Activated CD4-positive, alpha-beta T cell treated with anti-CD3 and anti-CD28 coated beads, Interleukin-2, amount 10 ng/mL, durations not matched to agents 24 days and 14 days (primary cell): ENCODE measurements at regions of chr17 and their contacts with region 1.

Region 1: DNA sequence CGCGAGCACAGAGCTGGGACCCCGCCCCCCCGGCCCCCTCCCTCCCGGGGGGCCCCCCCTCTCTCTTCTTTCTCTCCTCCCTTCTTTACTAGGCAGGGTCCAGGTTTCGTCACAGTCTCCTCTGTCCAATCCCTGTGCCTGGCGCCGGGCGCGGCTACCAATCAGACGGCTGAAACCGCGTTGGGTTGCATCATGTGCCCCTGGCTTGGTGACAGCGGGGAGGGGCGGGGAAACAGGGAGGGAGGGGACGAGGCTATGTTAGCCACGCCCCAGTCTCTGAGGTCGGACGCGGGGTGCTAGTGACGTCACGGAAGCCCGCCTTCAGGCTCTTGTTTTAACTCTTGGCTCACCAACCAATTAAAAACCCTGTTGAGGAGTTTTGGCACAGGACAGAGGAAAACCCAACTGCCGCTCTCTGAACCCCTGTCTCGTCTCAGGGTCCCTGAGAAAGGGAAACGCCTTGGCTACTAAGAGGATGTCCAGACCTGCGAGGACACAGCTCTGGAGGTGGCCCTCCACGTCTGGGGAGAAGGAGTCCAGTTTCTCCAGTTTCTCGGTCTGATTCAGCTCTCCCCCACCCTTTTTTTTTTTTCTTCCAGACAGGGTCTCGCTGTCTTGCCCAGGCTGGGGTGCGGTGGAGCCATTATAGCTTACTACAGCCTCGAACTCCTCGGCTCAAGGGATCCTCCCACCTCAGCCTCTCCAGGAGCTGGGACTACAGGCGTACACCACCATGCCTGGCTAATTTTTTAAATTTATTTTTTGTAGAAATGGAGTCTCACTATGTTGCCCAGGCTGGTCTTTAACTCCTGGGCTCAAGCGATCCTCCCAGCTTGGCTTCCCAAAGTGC is 439 bp upstream of the PLEKHH3 start:
- DNase-seq: peak; percentile 99
- H3K4me3 Mint-ChIP-seq: peak overlapping the region; percentile 81
- H3K27ac Mint-ChIP-seq: peak overlapping the region; percentile 79
- H3K4me1 Mint-ChIP-seq: peaks cover 46% of the 10 kb centered on the region
- H3K27me3 Mint-ChIP-seq: peaks cover 38% of the 10 kb centered on the region

Region 2: DNA sequence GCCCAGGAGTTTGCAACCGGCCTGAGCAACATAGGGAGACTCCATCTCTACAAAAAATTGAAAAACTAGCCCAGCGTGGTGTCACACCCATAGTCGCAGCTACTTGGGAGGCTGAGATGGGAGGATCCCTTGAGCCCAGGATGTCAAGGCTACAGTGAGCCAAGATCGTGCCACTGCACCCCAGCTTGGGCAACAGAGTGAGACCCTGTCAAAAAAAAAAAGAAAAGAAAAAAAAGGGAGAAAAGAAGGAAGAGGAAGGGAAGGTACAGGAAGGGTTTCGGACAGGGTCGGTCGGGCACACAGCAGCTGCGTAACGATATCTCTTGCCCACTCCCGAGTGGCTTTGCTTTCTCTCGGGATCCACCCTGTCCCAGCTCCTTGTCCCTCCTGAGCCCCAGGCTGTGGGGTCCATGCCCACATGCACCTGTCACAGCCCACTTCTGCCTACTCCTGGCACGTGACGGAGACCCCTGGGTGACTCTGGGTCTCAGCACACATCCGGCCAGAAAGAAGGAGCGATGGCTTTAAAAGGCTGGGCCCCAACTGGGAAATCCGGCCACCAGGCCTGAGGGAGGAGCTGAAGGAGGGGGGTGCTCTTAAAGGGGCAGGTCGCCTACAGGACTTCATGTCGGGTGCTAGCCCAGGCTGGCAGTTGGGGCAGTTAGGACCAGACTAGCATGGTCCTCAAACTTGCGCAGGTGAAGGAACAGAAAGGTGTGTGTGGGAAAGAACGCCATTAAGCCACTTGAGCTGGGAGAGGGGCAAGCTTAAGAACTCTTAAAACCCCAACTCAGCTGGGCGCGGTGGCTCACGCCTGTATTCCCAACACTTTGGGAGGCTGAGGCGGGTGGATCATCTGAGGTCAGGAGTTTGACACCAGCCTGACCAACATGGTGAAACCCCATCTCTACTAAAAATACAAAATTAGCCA is 483.0 kb before region 1 on chr17 and contains the start of gene GHDC:
- intact Hi-C with region 1: loop called (anchors 5 kb)
- DNase-seq: peak; percentile 95
- H3K4me3 Mint-ChIP-seq: peak within 1 kb of the TSS; percentile 89
- H3K27ac Mint-ChIP-seq: peak within 1 kb of the TSS; percentile 84
- H3K4me1 Mint-ChIP-seq: peaks cover 14% of the 10 kb centered on the region
- H3K27me3 Mint-ChIP-seq: no peaks in the 10 kb centered on the region
- total RNA-seq, gene GHDC: 14.4 and 17.5 TPM in 2 replicates

Region 3: DNA sequence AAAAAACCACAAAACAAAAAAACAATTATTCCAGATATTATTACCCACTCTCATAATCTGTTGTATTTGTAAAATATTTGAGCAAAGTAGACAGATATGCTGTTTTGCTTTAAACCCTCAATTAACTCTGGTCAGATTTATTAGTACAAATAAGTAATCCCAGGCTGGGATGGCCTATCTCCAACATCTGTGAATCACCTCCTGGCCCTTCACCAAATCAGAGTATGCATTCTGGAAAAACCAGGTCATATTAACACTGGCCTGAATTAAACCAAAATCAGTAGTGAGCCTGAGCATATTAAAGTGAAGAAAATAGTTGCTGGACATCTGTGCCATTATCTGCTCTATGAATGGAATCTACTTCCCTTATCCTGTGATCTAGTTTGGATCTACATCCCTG is 330.0 kb before region 1 on chr17:
- intact Hi-C with region 1: no loop called
- DNase-seq: no peak
- H3K4me3 Mint-ChIP-seq: no peak overlapping the region
- H3K27ac Mint-ChIP-seq: peak overlapping the region; percentile 76
- H3K4me1 Mint-ChIP-seq: peaks cover 38% of the 10 kb centered on the region
- H3K27me3 Mint-ChIP-seq: no peaks in the 10 kb centered on the region

Region 4: DNA sequence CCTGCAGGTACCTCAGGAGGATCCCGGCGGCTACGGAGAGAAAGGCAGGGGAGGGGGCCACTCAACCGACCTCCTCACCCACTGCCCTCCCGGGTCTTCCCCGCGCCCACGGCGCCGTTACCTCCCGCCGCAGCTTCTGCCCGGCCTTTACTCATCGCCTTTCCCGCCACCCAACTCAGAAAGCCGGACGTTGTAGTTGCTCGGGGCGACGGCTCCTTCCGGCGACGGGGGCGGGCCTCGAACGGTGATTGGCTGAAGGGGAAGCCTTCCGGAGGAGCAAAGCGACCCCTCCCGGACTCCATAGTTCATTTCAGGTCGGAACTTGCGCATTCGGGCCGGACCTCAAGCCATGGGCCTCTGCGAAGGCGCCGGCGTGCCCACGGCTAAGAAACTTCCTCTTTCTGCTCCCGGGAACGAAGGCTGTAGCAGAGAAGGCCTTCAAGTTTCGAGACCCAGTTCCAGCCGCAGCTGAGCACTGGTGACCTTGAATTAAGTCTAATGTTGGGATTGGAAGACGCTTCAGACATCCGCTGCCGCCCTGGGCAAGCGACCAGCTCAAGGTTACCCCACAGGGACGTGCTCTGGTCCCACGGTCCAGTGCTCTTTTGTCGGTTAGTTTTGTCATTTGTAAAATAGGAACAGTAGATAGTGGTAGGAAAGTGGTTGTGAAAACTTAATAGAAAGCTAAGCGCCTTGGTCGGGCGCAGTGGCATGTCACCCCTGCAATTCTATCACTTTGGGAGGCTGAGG is 99.5 kb before region 1 on chr17 and contains the start of gene PSMC3IP:
- intact Hi-C with region 1: loop called (anchors 1 kb)
- DNase-seq: peak; percentile 98
- H3K4me3 Mint-ChIP-seq: peak within 1 kb of the TSS; percentile 88
- H3K27ac Mint-ChIP-seq: peak within 1 kb of the TSS; percentile 96
- H3K4me1 Mint-ChIP-seq: peaks cover 30% of the 10 kb centered on the region
- H3K27me3 Mint-ChIP-seq: no peaks in the 10 kb centered on the region
- total RNA-seq, gene PSMC3IP: 29.1 and 31.1 TPM in 2 replicates

Region 5: DNA sequence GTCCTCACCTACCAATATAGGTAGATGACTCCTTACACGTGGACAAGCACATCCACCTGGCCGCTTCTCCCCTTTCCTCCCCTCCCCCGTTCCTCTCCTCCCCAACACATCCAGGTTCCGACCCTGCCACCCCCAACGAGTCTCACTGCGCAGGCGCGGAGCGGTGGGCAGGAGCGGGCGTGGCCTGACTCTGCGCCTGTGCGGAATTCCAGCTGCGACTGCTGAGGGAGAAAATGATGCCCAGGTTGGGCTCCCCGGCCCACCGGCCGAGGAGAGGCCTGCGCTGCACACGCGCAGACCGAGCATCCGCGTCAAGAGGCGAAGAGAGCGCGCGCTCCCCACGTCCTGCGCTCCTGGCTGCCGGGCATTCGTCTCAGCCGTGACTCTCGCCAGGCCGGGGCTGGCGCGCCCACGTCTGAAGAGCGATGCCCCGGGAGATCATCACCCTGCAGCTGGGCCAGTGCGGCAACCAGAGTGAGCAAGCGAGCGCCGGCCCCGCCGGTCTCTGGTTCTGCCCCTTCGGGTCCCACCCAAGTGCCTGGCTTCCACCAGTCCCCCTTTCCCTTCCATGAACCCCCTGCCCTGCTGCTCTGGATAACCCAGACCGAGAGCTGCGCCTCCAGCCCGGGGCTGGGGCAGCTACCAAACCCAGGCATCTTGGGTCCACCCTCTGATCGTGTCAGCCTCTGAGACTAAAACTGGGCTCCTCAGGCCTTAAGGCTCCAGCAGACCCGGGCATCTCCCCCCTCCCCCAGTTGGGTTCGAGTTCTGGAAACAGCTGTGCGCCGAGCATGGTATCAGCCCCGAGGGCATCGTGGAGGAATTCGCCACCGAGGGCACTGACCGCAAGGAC is 17.9 kb before region 1 on chr17 and contains the start of gene TUBG2:
- intact Hi-C with region 1: loop called (anchors 2 kb)
- DNase-seq: peak; percentile 93
- H3K4me3 Mint-ChIP-seq: peak within 1 kb of the TSS; percentile 94
- H3K27ac Mint-ChIP-seq: peak within 1 kb of the TSS; percentile 85
- H3K4me1 Mint-ChIP-seq: peaks cover 24% of the 10 kb centered on the region
- H3K27me3 Mint-ChIP-seq: peaks cover 9% of the 10 kb centered on the region
- total RNA-seq, gene TUBG2: 11.8 and 12.9 TPM in 2 replicates

Region 6: DNA sequence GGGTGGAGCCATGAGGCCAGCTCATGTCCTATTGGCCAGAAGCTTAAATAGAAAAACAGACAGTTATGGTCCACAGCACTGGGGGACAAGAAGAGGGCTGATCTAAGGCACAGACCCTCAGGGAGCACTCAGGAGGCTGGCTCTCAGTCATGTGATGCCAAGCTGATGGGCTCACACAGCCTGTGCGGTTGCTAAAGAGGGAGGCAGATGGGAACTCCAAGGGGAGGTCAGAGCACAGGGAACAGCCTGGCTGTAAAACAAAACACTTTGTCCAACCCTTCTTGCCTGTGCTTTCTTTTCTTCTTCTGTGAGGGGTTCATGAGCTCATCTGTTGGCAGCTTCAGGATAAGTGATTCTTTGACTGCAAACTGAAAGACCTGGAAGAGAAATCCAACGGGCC is 32.3 kb after region 1 on chr17:
- intact Hi-C with region 1: no loop called
- DNase-seq: no peak
- H3K4me3 Mint-ChIP-seq: no peak overlapping the region
- H3K27ac Mint-ChIP-seq: no peak overlapping the region
- H3K4me1 Mint-ChIP-seq: peaks cover 10% of the 10 kb centered on the region
- H3K27me3 Mint-ChIP-seq: no peaks in the 10 kb centered on the region

Region 7: DNA sequence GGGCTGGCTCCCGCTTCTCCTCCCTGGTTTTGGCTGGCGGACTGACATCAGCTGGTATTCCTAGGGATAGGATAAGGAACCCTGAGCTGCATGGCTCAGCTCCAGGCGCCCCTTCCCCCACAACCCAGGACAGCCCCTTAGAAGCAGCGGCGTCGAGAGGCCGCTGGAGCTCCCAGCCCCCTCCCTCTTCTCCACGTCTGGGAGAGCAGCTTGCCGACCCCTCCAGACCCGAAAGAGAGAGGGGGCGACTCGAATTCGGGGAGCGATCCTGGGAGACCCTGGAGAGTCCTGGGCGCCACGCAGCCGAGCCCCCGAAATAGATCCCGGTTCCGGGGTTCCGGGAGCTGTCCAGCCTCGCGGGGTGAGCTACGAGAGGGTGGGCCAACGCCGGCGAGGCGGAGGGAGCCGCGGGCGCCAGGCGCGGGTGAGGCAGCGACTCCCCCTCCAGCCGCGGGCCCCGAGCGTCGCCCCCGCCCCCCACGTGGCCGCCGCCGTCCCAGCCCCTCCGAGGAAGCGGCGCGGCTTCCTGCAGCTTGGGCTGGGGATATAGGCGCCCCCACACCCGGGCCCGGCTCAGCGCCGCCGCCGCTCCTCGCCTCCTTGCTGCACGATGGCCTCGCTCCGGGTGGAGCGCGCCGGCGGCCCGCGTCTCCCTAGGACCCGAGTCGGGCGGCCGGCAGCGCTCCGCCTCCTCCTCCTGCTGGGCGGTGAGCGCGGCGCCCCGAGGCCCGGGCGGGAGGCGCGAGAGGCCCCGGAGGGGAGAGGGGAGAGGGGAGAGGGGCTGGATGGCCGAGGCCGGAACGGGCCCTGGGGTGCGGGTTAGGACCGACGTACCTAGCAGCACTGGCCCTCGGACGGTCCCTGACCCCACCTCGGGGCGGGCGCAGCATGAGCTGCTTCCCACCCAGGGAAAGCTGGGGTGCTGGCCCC is 83.7 kb after region 1 on chr17 and contains the start of gene RAMP2:
- intact Hi-C with region 1: no loop called
- DNase-seq: peak; percentile 71
- H3K4me3 Mint-ChIP-seq: peak within 1 kb of the TSS; percentile 44
- H3K27ac Mint-ChIP-seq: no peak within 1 kb of the TSS
- H3K4me1 Mint-ChIP-seq: peaks cover 4% of the 10 kb centered on the region
- H3K27me3 Mint-ChIP-seq: peaks cover 60% of the 10 kb centered on the region
- total RNA-seq, gene RAMP2: not detected in 2 replicates

Region 8: GRCh38 chr17:42779936-42780850 is 103.0 kb after region 1 on chr17 and contains the start of gene WNK4:
- intact Hi-C with region 1: loop called (anchors 5 kb)
- DNase-seq: no peak
- H3K4me3 Mint-ChIP-seq: no peak within 1 kb of the TSS
- H3K27ac Mint-ChIP-seq: no peak within 1 kb of the TSS
- H3K4me1 Mint-ChIP-seq: peaks cover 13% of the 10 kb centered on the region
- H3K27me3 Mint-ChIP-seq: peaks cover 45% of the 10 kb centered on the region
- total RNA-seq, gene WNK4: 0.12 TPM in 2 replicates